ENCODE measurements at regions of chr4 and their contacts with region 1.

Region 1: GRCh38 chr4:87220094-87220822 is at the start of gene KLHL8:
- DNase-seq: peak; percentile 87 to 95 (median 90)
- ATAC-seq: peak; percentile 95 to 99 (median 98)
- H3K4me3 ChIP-seq: peak within 1 kb of the TSS; percentile 75 to 99 (median 92)
- H3K27ac ChIP-seq: peak within 1 kb of the TSS; percentile 81 to 96 (median 92)
- H3K4me1 ChIP-seq: peaks cover 0 to 18% (median 8%) of the 10 kb centered on the region in 12 donors
- H3K27me3 ChIP-seq: no peaks in the 10 kb centered on the region
- CTCF ChIP-seq: peak in 4 of 12 donors; percentile 15 to 31 (median 28)
- POLR2A ChIP-seq: peak in 1 of 2 donors; percentile 80
- total RNA-seq, gene KLHL8: 5.6 to 14.7 (median 10.6) TPM

Region 2: GRCh38 chr4:86908251-86908657 is 312.0 kb before region 1 on chr4:
- intact Hi-C with region 1: loop called in 1 of 10 experiments (anchors 5 kb)
- DNase-seq: no peak
- ATAC-seq: peak in 1 of 4 donors; percentile 36
- H3K4me3 ChIP-seq: peak overlapping the region in 2 of 12 donors; percentile 9 to 21
- H3K27ac ChIP-seq: peak overlapping the region in 9 of 12 donors; percentile 3 to 88 (median 21)
- H3K4me1 ChIP-seq: peaks cover 0 to 52% (median 8%) of the 10 kb centered on the region in 12 donors
- H3K27me3 ChIP-seq: no peaks in the 10 kb centered on the region
- CTCF ChIP-seq: no peak
- POLR2A ChIP-seq: no peak

Region 3: GRCh38 chr4:86927843-86928395 is 292.3 kb before region 1 on chr4:
- intact Hi-C with region 1: loop called in 5 of 10 experiments (anchors 5 to 10 kb)
- DNase-seq: peak in 1 of 5 donors; percentile 38
- ATAC-seq: peak in 3 of 4 donors; percentile 63 to 87 (median 73)
- H3K4me3 ChIP-seq: no peak overlapping the region
- H3K27ac ChIP-seq: peak overlapping the region in 3 of 12 donors; percentile 34 to 63 (median 55)
- H3K4me1 ChIP-seq: peaks cover 0 to 33% (median 0%) of the 10 kb centered on the region in 12 donors
- H3K27me3 ChIP-seq: no peaks in the 10 kb centered on the region
- CTCF ChIP-seq: no peak
- POLR2A ChIP-seq: no peak

Region 4: GRCh38 chr4:86934771-86935565 is 285.3 kb before region 1 on chr4 and contains the start of gene AFF1:
- intact Hi-C with region 1: loop called in 2 of 10 experiments (anchors 2 to 5 kb)
- DNase-seq: peak; percentile 94 to 97 (median 96)
- ATAC-seq: peak; percentile 94 to 97 (median 94)
- H3K4me3 ChIP-seq: peak within 1 kb of the TSS; percentile 58 to 98 (median 94)
- H3K27ac ChIP-seq: peak within 1 kb of the TSS; percentile 87 to 100 (median 98)
- H3K4me1 ChIP-seq: peaks cover 6 to 49% (median 36%) of the 10 kb centered on the region in 12 donors
- H3K27me3 ChIP-seq: no peaks in the 10 kb centered on the region
- CTCF ChIP-seq: peak; percentile 29 to 83 (median 52)
- POLR2A ChIP-seq: peak; percentile 73 to 95
- total RNA-seq, gene AFF1: 55.8 to 96.5 (median 73.3) TPM

Region 5: DNA sequence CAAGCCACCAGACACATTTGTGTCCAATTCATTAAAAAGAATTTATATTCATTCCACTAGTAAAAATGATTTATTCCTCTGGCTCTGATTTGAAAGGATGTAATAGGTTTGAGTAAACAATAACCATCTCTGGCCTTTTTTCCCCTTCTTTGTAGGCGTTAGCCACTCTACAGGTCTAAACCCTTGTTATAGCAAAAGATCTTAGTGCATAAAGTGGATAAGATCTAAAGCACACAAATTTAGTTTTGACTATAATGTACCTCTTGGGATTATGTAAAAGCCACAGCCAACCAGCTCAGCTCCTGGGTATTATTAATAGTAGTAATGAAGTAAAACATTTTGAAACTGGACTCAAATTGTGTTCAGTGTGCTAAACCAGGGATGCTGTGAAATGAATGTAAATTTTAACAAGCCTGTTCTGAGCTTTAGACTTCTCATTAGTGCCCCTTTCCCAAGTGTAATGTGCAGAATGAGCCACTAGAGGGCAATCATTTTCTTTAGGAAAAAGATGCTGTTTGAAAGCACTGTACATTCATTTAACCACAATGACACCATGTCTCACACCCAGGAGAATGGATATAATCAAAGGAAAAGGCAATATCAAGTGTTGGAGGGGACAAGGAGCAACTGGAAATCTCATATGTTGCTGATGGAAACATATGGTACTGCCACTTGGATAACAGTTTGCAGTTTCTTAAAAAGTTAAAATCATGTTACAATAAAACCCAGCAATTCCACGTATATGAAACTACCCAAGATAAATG is 69.6 kb before region 1 on chr4:
- intact Hi-C with region 1: loop called in 1 of 10 experiments (anchors 5 kb)
- DNase-seq: peak in 2 of 5 donors; percentile 27 to 46
- ATAC-seq: peak; percentile 38 to 82 (median 74)
- H3K4me3 ChIP-seq: no peak overlapping the region
- H3K27ac ChIP-seq: no peak overlapping the region
- H3K4me1 ChIP-seq: no peaks in the 10 kb centered on the region
- H3K27me3 ChIP-seq: no peaks in the 10 kb centered on the region
- CTCF ChIP-seq: peak; percentile 82 to 94 (median 90)
- POLR2A ChIP-seq: no peak

Region 6: GRCh38 chr4:87179751-87180150 is 40.5 kb before region 1 on chr4:
- intact Hi-C with region 1: loop called in 1 of 10 experiments (anchors 5 kb)
- DNase-seq: no peak
- ATAC-seq: no peak
- H3K4me3 ChIP-seq: no peak overlapping the region
- H3K27ac ChIP-seq: no peak overlapping the region
- H3K4me1 ChIP-seq: no peaks in the 10 kb centered on the region
- H3K27me3 ChIP-seq: no peaks in the 10 kb centered on the region
- CTCF ChIP-seq: no peak
- POLR2A ChIP-seq: no peak

Measured in heart left ventricle (tissue), 16 donors.